Activated naive CD4-positive, alpha-beta T cell treated with anti-CD3 and anti-CD28 coated beads for 36 hours (primary cell): ENCODE measurements at regions of chr1 and their contacts with region 1.

Region 1: DNA sequence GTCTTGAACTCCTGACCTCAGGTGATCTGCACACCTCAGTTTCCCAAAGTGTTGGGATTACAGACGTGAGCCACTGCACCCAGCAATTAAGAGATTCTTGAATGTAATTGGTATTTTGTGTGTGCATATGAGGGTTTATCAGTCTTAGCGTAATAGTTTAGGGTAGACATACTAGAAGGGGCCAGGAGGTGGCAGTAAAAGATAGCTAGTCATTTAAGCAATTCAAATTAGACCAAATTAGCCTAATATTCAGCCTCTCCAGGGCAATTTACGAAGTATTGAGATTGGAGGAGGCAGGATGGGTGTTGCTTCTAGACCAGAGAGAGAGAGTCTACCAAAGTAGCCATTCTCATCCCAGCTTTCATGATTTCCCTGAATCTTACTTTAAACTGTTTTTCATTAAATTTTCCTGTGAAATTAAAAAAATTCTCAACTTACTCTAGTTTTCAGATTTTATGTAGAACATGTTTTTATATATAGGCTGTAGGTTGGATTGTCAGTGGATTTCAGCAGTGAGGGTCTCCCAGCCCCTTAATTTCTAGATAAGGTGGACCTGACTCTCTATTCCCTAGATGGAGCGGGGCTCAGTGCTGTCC is 119.7 kb downstream of the HHAT start:
- DNase-seq: peak; percentile 56
- H3K4me3 Mint-ChIP-seq: no peak overlapping the region
- H3K27ac Mint-ChIP-seq: no peak overlapping the region
- H3K4me1 Mint-ChIP-seq: peaks cover 31% of the 10 kb centered on the region
- H3K27me3 Mint-ChIP-seq: peaks cover 7% of the 10 kb centered on the region

Region 2: GRCh38 chr1:209769171-209769904 is 679.1 kb before region 1 on chr1:
- CTCF ChIA-PET with region 1: no interaction called
- intact Hi-C with region 1: loop called (anchors 5 kb)
- DNase-seq: peak; percentile 92
- H3K4me3 Mint-ChIP-seq: no peak overlapping the region
- H3K27ac Mint-ChIP-seq: no peak overlapping the region
- H3K4me1 Mint-ChIP-seq: peaks cover 10% of the 10 kb centered on the region
- H3K27me3 Mint-ChIP-seq: no peaks in the 10 kb centered on the region

Region 3: DNA sequence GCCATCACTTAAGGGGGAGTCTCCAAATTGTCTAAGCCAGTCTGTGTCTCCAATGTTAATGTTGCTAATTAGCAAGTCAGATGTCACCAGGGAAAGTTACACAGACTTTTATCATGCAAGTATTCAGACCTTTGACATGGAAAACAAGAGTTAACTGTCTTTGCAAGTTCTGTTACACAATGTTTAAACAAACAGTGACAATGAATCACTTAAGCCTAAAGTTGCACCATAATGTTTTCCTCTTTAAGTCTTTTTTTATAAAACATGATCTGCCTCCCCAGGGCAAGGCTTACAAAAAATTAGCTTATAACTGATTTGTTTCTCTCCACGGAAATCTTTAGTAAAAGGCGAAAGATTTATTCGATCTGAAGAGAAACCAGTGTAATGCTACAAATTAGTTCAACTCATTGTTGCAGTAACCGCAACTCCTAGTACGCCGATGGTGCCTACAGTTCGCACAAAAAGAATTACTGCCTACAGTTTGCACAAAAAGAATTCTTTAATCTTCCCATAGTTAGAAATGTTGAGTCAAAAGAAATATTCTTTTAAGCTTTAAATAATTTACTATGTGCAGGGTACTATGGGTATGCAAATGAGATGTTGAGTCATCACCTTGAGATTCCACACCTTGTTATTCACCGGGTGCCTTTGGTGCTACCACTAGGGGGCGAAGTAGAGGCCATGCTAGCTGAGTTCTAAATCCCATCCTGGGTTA is 74.4 kb before region 1 on chr1:
- CTCF ChIA-PET with region 1: interaction called, 3 read pairs
- intact Hi-C with region 1: loop called (anchors 1 kb)
- DNase-seq: peak; percentile 93
- H3K4me3 Mint-ChIP-seq: no peak overlapping the region
- H3K27ac Mint-ChIP-seq: peak overlapping the region; percentile 88
- H3K4me1 Mint-ChIP-seq: peaks cover 36% of the 10 kb centered on the region
- H3K27me3 Mint-ChIP-seq: no peaks in the 10 kb centered on the region

Region 4: DNA sequence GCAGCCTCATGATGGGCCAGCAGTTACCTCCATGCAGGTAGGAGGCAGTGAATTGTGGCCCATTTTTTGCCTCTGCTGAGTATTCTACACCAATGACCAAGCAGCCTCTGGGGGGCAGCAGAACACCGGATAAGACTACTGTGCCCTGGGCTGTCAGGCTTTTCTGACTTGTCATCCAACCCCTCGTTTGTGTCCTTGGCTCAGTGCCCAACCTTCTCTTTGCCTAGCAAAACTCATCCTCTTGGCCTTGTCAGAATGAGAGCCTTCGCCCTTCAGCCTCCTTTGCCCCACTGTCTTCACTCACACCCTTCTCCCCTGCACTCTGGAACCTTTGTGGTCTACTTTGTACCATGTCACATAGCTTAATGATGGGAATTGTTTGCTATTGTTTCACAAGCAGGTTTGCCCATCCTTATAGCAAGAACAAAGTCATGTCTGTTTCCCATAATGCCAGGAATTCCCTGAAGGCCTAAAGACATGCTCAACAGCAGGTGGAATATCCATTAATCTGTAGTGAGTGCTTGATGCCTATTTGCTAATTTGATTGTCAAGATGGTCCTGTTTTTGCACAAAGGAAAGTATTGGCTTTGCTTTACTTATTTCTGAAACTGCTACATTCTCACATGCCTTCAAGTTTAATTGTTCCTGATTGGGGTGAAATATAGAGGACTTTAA is 136.2 kb after region 1 on chr1:
- CTCF ChIA-PET with region 1: interaction called, 34 read pairs
- intact Hi-C with region 1: loop called (anchors 1 kb)
- DNase-seq: peak; percentile 90
- H3K4me3 Mint-ChIP-seq: no peak overlapping the region
- H3K27ac Mint-ChIP-seq: no peak overlapping the region
- H3K4me1 Mint-ChIP-seq: peaks cover 3% of the 10 kb centered on the region
- H3K27me3 Mint-ChIP-seq: peaks cover 6% of the 10 kb centered on the region

Region 5: DNA sequence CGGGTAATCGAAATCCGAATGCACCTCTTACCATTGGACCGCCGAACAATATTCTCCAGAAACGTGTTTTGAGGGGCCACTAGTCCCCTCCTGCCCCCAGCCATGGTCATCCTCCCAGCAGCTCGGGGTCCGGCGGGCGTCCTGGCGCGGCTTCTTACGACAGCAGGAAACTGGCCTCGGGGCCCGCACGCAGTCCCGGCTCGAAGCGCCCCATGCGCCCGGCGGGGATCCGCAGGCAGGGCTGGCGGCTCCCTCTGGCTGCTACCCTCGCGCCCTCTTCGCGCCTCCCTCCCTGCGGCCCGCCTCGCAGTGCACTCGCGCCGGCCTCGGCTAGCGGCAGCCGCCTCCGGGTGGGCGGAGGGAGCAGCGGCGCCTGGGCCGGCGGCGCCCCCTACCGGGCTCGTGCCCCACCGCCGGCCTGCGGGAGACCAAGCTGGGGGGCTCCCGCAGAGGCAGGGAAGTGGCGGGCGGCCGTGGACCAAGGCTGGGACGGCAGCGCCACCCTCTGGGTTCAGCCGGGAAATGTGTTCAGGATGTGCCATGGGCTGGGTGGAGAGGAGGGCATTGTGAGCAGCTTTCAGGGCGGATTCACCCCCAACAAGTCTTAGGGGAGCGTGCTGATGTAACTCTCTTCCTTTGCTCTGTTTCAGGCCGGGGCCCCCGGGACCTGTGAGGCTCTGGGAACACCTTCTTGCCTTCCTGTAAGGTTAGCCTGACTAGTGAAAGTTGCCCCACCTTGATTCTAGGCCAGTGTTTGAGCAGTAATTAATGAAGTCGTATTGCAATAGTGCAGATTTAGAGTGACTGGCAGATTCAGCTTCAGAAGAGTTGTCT is 685.7 kb after region 1 on chr1 and contains the start of gene KCNH1:
- CTCF ChIA-PET with region 1: interaction called, 55 read pairs
- intact Hi-C with region 1: loop called (anchors 1 kb)
- DNase-seq: peak; percentile 90
- H3K4me3 Mint-ChIP-seq: peak within 1 kb of the TSS; percentile 66
- H3K27ac Mint-ChIP-seq: no peak within 1 kb of the TSS
- H3K4me1 Mint-ChIP-seq: peaks cover 7% of the 10 kb centered on the region
- H3K27me3 Mint-ChIP-seq: peaks cover 50% of the 10 kb centered on the region
- total RNA-seq, gene KCNH1: not detected

Region 6: DNA sequence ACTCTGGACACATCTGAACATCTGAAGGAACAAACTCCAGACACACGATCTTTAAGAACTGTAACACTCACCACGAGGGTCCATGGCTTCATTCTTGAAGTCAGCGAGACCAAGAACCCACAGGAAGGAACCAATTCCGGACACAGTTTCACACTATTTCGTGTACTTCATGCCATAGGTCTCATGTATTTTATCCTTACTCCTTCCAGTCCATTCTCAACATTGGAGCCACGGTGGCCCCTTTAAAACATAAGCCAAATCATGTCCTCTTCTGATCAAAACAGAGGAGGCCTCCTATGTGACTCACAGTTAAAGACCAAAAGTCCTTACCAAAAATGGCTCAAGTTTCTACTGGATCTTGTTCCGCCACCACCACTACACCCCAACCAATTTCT is 781.0 kb after region 1 on chr1:
- CTCF ChIA-PET with region 1: no interaction called
- intact Hi-C with region 1: no loop called
- DNase-seq: no peak
- H3K4me3 Mint-ChIP-seq: peak overlapping the region; percentile 0
- H3K27ac Mint-ChIP-seq: peak overlapping the region; percentile 36
- H3K4me1 Mint-ChIP-seq: peaks cover 25% of the 10 kb centered on the region
- H3K27me3 Mint-ChIP-seq: no peaks in the 10 kb centered on the region

Region 7: DNA sequence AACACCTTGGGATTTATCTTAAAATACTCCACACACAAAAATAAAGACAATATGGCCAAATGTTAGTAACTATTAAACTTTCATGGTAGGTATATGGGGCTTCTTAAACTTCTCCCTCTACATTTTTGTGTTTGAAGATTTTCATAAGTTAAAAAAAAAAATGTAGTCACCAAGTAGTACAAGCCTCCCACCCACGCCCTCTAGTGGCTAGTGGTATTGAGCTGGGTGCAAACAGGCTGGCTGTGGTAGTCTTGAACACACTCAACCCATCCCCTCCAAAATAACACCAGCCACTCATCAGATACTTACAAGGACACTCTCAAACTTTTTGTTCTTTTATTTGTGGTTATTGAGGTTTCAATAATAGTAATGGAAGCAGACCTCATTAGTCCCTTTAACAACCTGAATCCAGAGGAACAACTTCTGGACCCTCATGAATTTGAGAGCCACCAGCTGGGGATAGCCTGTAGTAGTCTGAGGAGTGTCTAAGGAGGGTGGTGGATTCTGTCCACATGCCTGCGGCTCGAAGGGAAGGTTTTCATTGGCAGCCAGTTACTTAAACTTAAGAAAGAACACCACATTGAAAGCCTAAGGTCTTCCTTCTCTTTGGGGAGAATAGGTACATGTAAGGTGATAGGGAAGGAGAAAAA is 1027.9 kb after region 1 on chr1:
- CTCF ChIA-PET with region 1: no interaction called
- intact Hi-C with region 1: loop called (anchors 2 kb)
- DNase-seq: peak; percentile 90
- H3K4me3 Mint-ChIP-seq: no peak overlapping the region
- H3K27ac Mint-ChIP-seq: no peak overlapping the region
- H3K4me1 Mint-ChIP-seq: no peaks in the 10 kb centered on the region
- H3K27me3 Mint-ChIP-seq: peaks cover 16% of the 10 kb centered on the region